ENCODE measurements at regions of chr1 and their contacts with region 1.

Region 1: DNA sequence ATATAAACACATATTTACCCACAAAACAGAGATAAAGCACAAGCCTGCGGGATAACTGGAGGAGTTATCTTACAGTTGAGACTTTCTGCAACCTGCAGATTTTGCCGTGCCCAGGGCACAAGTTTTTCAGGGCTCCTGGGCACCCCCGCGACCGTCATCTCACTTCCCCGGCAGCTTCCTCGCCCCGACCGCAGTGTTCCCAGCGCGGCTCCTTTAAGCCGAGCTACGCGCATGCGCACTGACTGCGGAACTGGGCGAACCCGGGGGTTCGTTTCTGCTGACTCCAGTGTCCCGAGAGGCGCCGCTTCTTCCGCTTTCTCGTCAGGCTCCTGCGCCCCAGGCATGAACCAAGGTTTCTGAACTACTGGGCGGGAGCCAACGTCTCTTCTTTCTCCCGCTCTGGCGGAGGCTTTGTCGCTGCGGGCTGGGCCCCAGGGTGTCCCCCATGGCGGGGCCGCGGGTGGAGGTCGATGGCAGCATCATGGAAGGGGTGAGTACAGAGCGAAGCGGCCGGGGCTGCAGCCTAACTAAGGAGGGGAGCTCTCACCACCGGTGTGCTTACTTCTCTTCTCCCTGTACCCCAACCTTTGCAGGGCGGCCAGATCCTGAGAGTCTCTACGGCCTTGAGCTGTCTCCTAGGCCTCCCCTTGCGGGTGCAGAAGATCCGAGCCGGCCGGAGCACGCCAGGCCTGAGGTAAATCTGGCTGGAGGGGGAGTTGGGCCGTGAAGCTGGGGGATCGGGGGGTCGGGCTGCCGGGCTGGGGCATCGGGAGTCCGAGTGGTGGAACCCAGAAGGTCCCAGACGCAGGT is at the start of gene RTCA:
- DNase-seq: peak; percentile 93
- H3K4me3 Mint-ChIP-seq: peak within 1 kb of the TSS; percentile 99
- H3K27ac Mint-ChIP-seq: peak within 1 kb of the TSS; percentile 99
- H3K4me1 Mint-ChIP-seq: peaks cover 25% of the 10 kb centered on the region
- H3K27me3 Mint-ChIP-seq: no peaks in the 10 kb centered on the region
- total RNA-seq, gene RTCA: 53.4 and 55.7 TPM in 2 replicates

Region 2: DNA sequence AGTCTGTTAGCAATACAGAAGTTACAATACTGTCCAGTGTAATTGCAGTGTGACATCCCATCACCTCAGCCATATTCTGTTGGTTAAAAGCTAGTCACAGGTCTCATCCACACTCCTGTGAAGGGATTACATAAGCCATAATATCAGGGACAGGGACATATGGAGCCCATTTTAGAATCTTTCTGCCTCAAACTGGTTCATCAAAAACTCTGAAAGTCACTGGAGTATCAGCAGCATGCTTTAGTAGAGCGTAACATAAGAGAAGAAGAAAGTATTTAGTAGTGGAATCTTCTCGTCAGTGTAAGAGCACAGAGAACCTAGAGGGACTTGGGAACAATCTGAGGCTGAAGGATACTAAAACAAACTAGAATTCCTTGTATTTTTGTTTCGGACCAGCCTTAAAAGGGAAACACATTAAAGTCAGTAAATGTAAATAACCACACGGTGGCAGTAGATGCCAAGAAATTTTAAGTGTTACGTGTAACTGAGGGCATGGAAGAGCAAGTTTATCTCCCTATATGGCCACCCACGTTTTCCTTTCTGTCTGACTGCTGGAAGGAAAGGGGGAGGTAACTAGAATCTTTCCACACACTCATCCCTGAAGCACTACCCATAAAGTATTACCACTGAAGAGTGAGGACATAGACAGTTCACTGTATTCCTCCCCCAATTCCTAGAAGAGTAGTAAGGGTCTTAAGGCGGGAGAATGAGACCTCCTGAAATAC is 457.6 kb before region 1 on chr1:
- intact Hi-C with region 1: loop called (anchors 10 kb)
- DNase-seq: no peak
- H3K4me3 Mint-ChIP-seq: no peak overlapping the region
- H3K27ac Mint-ChIP-seq: peak overlapping the region; percentile 47
- H3K4me1 Mint-ChIP-seq: peaks cover 17% of the 10 kb centered on the region
- H3K27me3 Mint-ChIP-seq: peaks cover 17% of the 10 kb centered on the region

Region 3: GRCh38 chr1:99969729-99970621 is 296.2 kb before region 1 on chr1 and contains the start of gene SLC35A3:
- intact Hi-C with region 1: loop called (anchors 10 kb)
- DNase-seq: peak; percentile 76
- H3K4me3 Mint-ChIP-seq: peak within 1 kb of the TSS; percentile 98
- H3K27ac Mint-ChIP-seq: peak within 1 kb of the TSS; percentile 92
- H3K4me1 Mint-ChIP-seq: peaks cover 22% of the 10 kb centered on the region
- H3K27me3 Mint-ChIP-seq: no peaks in the 10 kb centered on the region
- total RNA-seq, gene SLC35A3: 15.0 and 15.9 TPM in 2 replicates

Region 4: DNA sequence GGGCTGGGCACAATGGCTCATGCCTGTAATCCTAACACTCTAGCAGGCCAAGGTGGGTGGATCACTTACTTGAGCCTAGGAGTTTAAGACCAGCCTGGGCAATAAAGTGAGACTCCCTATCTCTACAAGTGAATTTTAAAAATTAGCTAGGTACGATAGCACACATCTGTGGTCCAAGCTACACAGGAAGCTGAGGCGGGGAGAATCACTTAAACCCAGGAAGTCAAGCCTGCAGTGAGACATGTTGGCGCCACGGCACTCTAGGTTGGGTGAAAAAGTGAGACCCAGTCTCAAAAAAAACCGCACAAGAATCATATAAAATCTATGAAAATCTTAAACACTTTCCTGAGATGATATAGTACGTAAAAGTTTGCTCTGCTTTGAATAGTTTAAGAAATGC is 46.7 kb before region 1 on chr1:
- intact Hi-C with region 1: no loop called
- DNase-seq: no peak
- H3K4me3 Mint-ChIP-seq: no peak overlapping the region
- H3K27ac Mint-ChIP-seq: no peak overlapping the region
- H3K4me1 Mint-ChIP-seq: peaks cover 7% of the 10 kb centered on the region
- H3K27me3 Mint-ChIP-seq: no peaks in the 10 kb centered on the region

Region 5: GRCh38 chr1:100229681-100230443 is 36.3 kb before region 1 on chr1:
- intact Hi-C with region 1: loop called (anchors 1 kb)
- DNase-seq: no peak
- H3K4me3 Mint-ChIP-seq: no peak overlapping the region
- H3K27ac Mint-ChIP-seq: no peak overlapping the region
- H3K4me1 Mint-ChIP-seq: peaks cover 5% of the 10 kb centered on the region
- H3K27me3 Mint-ChIP-seq: no peaks in the 10 kb centered on the region

Region 6: DNA sequence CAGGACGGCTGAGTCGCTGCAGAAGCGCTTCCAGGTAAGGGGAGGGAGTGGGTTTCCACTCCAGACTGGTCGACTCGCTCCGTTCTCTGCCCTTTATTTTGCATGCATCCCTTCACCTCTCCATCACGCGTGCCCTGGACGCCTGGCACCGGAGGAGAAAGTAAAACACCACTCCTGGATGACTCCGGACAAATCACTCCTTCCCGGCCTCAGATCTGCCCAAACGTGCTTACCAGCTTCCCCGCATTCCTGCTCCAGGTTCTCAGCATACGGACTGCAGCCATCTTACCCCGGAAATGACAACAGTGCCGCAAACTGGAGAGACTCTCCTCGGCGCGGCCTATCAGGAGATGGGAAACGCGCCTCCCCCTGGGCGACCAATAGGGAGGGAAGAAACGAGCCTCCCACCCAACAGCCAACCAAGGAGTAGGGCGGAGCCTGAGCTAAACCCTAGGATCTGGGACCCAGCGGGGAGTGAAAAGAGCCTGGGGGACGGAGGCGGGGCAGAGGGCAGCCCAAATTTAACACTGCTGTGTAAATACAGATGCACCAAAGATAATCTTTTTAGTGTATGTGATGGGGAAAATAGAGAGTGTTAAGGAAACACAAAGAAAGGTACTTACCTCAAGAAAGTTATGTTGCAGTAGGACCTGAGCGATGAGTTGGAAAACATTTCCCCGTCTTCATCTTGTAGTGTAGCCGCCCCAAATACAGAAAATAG is 16.4 kb before region 1 on chr1 and contains the start of gene DBT:
- intact Hi-C with region 1: loop called (anchors 2 kb)
- DNase-seq: peak; percentile 91
- H3K4me3 Mint-ChIP-seq: no peak within 1 kb of the TSS
- H3K27ac Mint-ChIP-seq: no peak within 1 kb of the TSS
- H3K4me1 Mint-ChIP-seq: peaks cover 9% of the 10 kb centered on the region
- H3K27me3 Mint-ChIP-seq: peaks cover 6% of the 10 kb centered on the region
- total RNA-seq, gene DBT: 10.4 and 10.7 TPM in 2 replicates

Region 7: DNA sequence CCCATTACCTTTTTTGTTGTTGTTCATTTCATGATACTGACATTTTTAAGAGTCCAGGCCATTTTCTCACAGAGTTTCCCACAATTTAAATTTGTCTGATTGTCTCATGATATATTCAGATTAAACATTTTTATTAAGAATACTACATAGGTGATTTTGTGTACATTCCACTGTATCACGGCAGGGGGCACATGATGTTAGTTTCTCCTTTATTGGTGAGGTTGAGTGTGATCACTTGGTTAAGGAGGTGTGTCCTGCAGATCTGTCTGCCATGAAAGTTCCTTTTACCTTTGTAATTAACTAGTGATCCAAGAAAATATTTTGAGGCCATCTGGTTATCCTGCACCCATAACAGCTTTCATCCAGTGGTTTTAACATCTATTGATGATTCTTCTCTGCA is 11.7 kb after region 1 on chr1:
- intact Hi-C with region 1: no loop called
- DNase-seq: no peak
- H3K4me3 Mint-ChIP-seq: no peak overlapping the region
- H3K27ac Mint-ChIP-seq: no peak overlapping the region
- H3K4me1 Mint-ChIP-seq: peaks cover 14% of the 10 kb centered on the region
- H3K27me3 Mint-ChIP-seq: no peaks in the 10 kb centered on the region

Region 8: GRCh38 chr1:100351095-100351891 is 85.2 kb after region 1 on chr1:
- intact Hi-C with region 1: loop called (anchors 1 kb)
- DNase-seq: peak; percentile 84
- H3K4me3 Mint-ChIP-seq: peak overlapping the region; percentile 87
- H3K27ac Mint-ChIP-seq: peak overlapping the region; percentile 89
- H3K4me1 Mint-ChIP-seq: peaks cover 35% of the 10 kb centered on the region
- H3K27me3 Mint-ChIP-seq: peaks cover 4% of the 10 kb centered on the region

Region 9: GRCh38 chr1:100443811-100444571 is 177.9 kb after region 1 on chr1:
- intact Hi-C with region 1: loop called (anchors 1 kb)
- DNase-seq: peak; percentile 21
- H3K4me3 Mint-ChIP-seq: peak overlapping the region; percentile 68
- H3K27ac Mint-ChIP-seq: peak overlapping the region; percentile 92
- H3K4me1 Mint-ChIP-seq: peaks cover 75% of the 10 kb centered on the region
- H3K27me3 Mint-ChIP-seq: no peaks in the 10 kb centered on the region

Measured in activated T-helper 2 cell treated with anti-CD3 and anti-CD28 coated beads, Interferon-gamma antibody, Interleukin-2, Interleukin-4, amounts not matched to agents 10 μg/mL and 5 μg/mL and 100 μg/mL, durations not matched to agents 14 hours and 24 hours and 36 hours (primary cell).